Breast epithelium (tissue), 4 donors: ENCODE measurements at regions of chrX and their contacts with region 1.

Region 1: GRCh38 chrX:25052798-25053534 is 37.2 kb upstream of the ARX start:
- DNase-seq: no peak
- H3K4me3 ChIP-seq: no peak overlapping the region
- H3K27ac ChIP-seq: no peak overlapping the region
- H3K4me1 ChIP-seq: no peaks in the 10 kb centered on the region
- H3K27me3 ChIP-seq: peaks cover 0 to 5% of the 10 kb centered on the region in 2 donors
- CTCF ChIP-seq: no peak
- POLR2A ChIP-seq: no peak

Region 2: DNA sequence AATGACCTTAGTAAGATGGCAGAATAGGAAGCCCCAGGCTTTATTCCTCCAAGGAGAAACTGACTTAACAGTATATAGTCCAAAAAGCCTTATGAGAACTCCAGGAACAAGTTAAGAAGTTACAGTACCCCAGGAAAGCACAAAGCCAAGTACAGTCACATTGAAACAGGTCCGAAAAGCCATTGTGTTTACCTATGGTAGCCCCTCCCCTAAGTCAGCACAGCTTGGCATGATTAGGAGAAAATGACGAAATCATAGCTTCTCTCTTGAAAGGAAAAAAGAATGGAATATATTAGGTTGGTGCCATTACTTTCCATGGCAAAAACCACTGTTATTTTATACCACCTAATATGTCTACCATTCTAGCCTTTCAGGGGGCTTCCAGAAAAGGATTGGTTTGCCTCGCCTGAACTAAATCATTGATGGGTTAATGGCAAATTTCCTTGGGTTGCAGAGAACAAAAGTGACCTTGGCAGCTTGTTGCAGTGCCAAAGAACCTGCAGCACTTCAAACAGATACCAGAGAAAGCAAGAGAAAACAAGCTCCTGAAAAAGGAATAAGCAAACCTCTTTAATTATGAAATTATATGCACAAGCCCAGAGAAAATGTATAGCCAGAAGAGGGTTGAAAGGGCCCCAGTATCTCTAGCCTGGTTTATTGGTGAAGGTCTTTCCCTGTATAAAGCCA is 1587.7 kb before region 1 on chrX:
- intact Hi-C with region 1: loop called (anchors 10 kb)
- DNase-seq: no peak
- H3K4me3 ChIP-seq: no peak overlapping the region
- H3K27ac ChIP-seq: no peak overlapping the region
- H3K4me1 ChIP-seq: no peaks in the 10 kb centered on the region
- H3K27me3 ChIP-seq: peaks cover 0 to 5% of the 10 kb centered on the region in 2 donors
- CTCF ChIP-seq: no peak
- POLR2A ChIP-seq: no peak

Region 3: DNA sequence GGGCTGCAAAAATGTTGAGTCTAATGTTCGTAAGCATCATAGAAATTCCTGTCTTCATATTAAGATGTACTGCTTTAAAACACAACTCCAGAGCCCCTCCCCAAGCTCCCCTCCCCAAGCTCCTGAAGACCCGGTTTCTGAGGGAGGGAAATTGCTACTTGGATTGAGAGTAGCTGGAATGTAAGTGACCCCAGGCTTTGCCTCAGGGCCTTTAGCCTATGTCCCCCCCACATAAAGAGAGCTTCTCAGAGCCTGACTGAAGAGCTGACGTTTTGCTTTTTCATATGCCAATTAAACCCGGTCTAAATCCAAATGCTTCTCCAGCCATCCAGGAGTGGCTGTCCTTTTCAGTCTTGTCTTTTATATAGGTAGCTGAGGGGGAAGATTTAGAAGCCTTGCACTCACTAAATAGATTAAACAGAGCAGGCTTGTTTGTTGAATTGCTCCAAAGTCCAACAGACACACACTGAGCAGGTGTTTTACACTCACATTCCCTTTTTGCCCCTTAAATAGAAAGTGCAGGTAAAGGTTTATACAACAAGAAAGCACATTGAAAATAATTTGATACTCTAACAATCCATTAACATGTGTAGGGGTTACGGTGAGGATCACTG is 56.8 kb before region 1 on chrX:
- intact Hi-C with region 1: no loop called
- DNase-seq: no peak
- H3K4me3 ChIP-seq: no peak overlapping the region
- H3K27ac ChIP-seq: no peak overlapping the region
- H3K4me1 ChIP-seq: no peaks in the 10 kb centered on the region
- H3K27me3 ChIP-seq: peaks cover 0 to 68% of the 10 kb centered on the region in 2 donors
- CTCF ChIP-seq: no peak
- POLR2A ChIP-seq: no peak

Region 4: GRCh38 chrX:25072247-25072646 is 19.3 kb after region 1 on chrX:
- intact Hi-C with region 1: no loop called
- DNase-seq: no peak
- H3K4me3 ChIP-seq: no peak overlapping the region
- H3K27ac ChIP-seq: no peak overlapping the region
- H3K4me1 ChIP-seq: no peaks in the 10 kb centered on the region
- H3K27me3 ChIP-seq: peaks cover 0 to 16% of the 10 kb centered on the region in 2 donors
- CTCF ChIP-seq: no peak
- POLR2A ChIP-seq: no peak